Aorta (tissue), 5 donors: ENCODE measurements at regions of chr21 and their contacts with region 1.

Region 1: GRCh38 chr21:23853796-23854379 is 1753.4 kb downstream of the MRPL39 start:
- DNase-seq: no peak
- ATAC-seq: no peak
- H3K4me3 ChIP-seq: no peak overlapping the region
- H3K27ac ChIP-seq: no peak overlapping the region
- H3K4me1 ChIP-seq: no peaks in the 10 kb centered on the region
- H3K27me3 ChIP-seq: no peaks in the 10 kb centered on the region

Region 2: DNA sequence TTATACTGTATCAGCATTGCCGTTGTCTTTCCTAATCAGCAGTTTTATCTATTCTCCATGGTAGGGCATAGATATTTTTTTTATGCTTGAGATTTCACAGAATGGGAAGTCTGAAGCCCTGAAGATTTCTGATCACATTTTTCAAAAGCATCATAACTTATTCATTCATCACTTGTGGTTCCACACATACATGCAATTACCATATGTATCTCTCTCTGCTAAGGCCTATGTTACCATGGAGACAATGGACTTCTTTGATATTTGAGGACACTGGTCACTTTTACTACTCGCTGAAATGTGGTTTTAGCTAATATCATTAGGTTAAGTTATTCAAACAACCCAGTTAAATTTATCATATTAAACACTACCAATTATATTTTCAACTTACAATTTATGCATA is 73.6 kb before region 1 on chr21:
- intact Hi-C with region 1: no loop called
- DNase-seq: no peak
- ATAC-seq: no peak
- H3K4me3 ChIP-seq: no peak overlapping the region
- H3K27ac ChIP-seq: no peak overlapping the region
- H3K4me1 ChIP-seq: no peaks in the 10 kb centered on the region
- H3K27me3 ChIP-seq: no peaks in the 10 kb centered on the region

Region 3: GRCh38 chr21:23887725-23888306 is 33.9 kb after region 1 on chr21:
- intact Hi-C with region 1: no loop called
- DNase-seq: no peak
- ATAC-seq: no peak
- H3K4me3 ChIP-seq: no peak overlapping the region
- H3K27ac ChIP-seq: no peak overlapping the region
- H3K4me1 ChIP-seq: no peaks in the 10 kb centered on the region
- H3K27me3 ChIP-seq: no peaks in the 10 kb centered on the region

Region 4: DNA sequence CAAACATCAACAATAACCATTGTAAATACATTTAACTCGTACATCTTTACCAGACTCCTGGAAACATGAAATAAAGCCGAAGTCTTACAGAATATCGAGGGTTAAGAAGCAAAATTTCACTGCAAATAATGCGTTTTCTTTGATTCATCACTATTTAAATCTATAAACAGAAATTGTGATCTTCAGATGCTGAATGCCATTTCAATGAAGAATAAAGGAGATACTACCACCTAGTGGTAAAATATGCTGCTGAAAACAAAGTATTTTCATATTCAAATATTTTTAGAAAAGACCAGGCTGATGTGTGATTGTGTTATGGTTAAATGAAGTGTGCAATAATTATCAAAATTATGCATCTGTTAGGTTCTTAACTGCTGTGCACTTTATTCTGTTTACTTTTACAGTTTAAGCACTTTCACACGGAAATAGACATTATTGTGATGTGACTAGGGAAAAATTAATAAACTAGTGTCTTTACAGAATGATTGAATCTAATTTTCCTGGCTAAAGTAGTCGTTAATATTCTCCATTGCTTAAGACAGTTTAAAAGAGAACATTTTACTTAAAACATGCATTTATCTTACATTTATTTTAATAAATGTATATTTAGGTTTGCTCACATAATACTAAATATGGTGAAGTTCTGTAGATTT is 660.3 kb after region 1 on chr21:
- intact Hi-C with region 1: loop called in 1 of 2 experiments (anchors 10 kb)
- DNase-seq: no peak
- ATAC-seq: no peak
- H3K4me3 ChIP-seq: no peak overlapping the region
- H3K27ac ChIP-seq: no peak overlapping the region
- H3K4me1 ChIP-seq: no peaks in the 10 kb centered on the region
- H3K27me3 ChIP-seq: no peaks in the 10 kb centered on the region